Gastrocnemius medialis (tissue), 4 donors: ENCODE measurements at regions of chr9 and their contacts with region 1.

Region 1: DNA sequence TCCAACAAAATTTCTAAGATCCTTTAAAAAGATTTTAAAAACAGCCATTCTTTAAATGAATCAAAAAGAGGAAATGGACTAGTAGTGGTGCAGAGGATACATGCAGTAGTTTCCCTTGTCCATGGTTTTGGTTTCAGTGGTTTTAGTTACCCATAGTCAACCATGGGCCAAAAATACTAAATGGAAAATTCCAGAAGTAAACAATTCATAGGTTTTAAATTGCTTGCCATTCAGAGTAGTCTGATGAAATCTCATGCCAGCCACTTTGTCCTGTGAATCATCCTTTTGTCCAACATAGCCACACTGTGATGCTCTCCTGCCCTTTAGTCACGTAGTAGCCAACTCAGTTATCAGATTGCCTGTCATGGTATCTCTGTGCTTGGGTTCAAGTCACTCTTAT is 286.1 kb downstream of the ANXA1 start:
- DNase-seq: no peak
- ATAC-seq: no peak
- H3K4me3 ChIP-seq: no peak overlapping the region
- H3K27ac ChIP-seq: no peak overlapping the region
- H3K4me1 ChIP-seq: no peaks in the 10 kb centered on the region
- H3K27me3 ChIP-seq: no peaks in the 10 kb centered on the region
- CTCF ChIP-seq: no peak
- POLR2A ChIP-seq: no peak

Region 2: GRCh38 chr9:73348471-73348870 is 89.3 kb before region 1 on chr9:
- in situ Hi-C with region 1: loop called in 1 of 4 experiments (anchors 25 kb)
- intact Hi-C with region 1: no loop called
- DNase-seq: no peak
- ATAC-seq: no peak
- H3K4me3 ChIP-seq: no peak overlapping the region
- H3K27ac ChIP-seq: no peak overlapping the region
- H3K4me1 ChIP-seq: no peaks in the 10 kb centered on the region
- H3K27me3 ChIP-seq: no peaks in the 10 kb centered on the region
- CTCF ChIP-seq: no peak
- POLR2A ChIP-seq: no peak